Psoas muscle (tissue), 8 donors: ENCODE measurements at regions of chr10 and their contacts with region 1.

Region 1: GRCh38 chr10:76303682-76304316 is 872.4 kb downstream of the LRMDA start:
- DNase-seq: peak; percentile 52 to 73
- ATAC-seq: peak; percentile 77 to 89 (median 84)
- H3K4me3 ChIP-seq: no peak overlapping the region
- H3K27ac ChIP-seq: no peak overlapping the region
- H3K4me1 ChIP-seq: no peaks in the 10 kb centered on the region
- H3K27me3 ChIP-seq: peaks cover 0 to 3% (median 0%) of the 10 kb centered on the region in 3 donors
- CTCF ChIP-seq: peak; percentile 57

Region 2: GRCh38 chr10:75672841-75673240 is 631.0 kb before region 1 on chr10:
- intact Hi-C with region 1: loop called in 1 of 2 experiments (anchors 10 kb)
- DNase-seq: no peak
- ATAC-seq: no peak
- H3K4me3 ChIP-seq: no peak overlapping the region
- H3K27ac ChIP-seq: no peak overlapping the region
- H3K4me1 ChIP-seq: no peaks in the 10 kb centered on the region
- H3K27me3 ChIP-seq: peaks cover 0 to 4% (median 0%) of the 10 kb centered on the region in 3 donors
- CTCF ChIP-seq: no peak

Region 3: DNA sequence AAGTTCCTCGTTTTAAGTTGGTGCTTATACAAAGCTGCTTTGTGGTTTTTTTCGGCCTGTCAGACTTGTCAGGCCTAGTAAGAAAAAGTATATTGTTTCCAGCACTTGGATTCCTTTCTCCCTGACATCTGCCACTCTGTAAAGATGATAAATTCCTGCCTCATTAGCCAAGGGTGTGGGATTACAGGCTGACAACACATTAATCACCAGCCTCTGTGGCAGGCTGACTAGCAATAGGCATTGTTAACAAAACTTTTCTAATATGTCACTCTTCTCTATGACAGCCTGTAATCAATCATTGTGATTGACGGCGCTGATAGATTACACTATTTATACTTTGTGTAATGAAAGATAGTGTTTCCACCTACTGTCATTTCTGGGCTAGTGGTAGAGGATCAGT is 189.8 kb before region 1 on chr10:
- intact Hi-C with region 1: loop called in 1 of 2 experiments (anchors 10 kb)
- DNase-seq: no peak
- ATAC-seq: peak; percentile 66 to 82 (median 79)
- H3K4me3 ChIP-seq: no peak overlapping the region
- H3K27ac ChIP-seq: peak overlapping the region; percentile 23
- H3K4me1 ChIP-seq: peaks cover 18% of the 10 kb centered on the region
- H3K27me3 ChIP-seq: peaks cover 0 to 35% (median 8%) of the 10 kb centered on the region in 3 donors
- CTCF ChIP-seq: no peak

Region 4: GRCh38 chr10:76547352-76547972 is 243.7 kb after region 1 on chr10:
- intact Hi-C with region 1: loop called in 1 of 2 experiments (anchors 10 kb)
- DNase-seq: peak; percentile 62 to 75
- ATAC-seq: peak in 3 of 4 donors; percentile 65 to 75 (median 71)
- H3K4me3 ChIP-seq: no peak overlapping the region
- H3K27ac ChIP-seq: no peak overlapping the region
- H3K4me1 ChIP-seq: no peaks in the 10 kb centered on the region
- H3K27me3 ChIP-seq: no peaks in the 10 kb centered on the region
- CTCF ChIP-seq: peak; percentile 85